ENCODE measurements at regions of chr6 and their contacts with region 1.

Region 1: GRCh38 chr6:117317261-117317660 is 51.9 kb downstream of the VGLL2 start:
- DNase-seq: no peak
- ATAC-seq: no peak
- H3K4me3 Mint-ChIP-seq: no peak overlapping the region
- H3K27ac Mint-ChIP-seq: no peak overlapping the region
- H3K4me1 Mint-ChIP-seq: no peaks in the 10 kb centered on the region
- H3K27me3 Mint-ChIP-seq: peaks cover 13% of the 10 kb centered on the region

Region 2: DNA sequence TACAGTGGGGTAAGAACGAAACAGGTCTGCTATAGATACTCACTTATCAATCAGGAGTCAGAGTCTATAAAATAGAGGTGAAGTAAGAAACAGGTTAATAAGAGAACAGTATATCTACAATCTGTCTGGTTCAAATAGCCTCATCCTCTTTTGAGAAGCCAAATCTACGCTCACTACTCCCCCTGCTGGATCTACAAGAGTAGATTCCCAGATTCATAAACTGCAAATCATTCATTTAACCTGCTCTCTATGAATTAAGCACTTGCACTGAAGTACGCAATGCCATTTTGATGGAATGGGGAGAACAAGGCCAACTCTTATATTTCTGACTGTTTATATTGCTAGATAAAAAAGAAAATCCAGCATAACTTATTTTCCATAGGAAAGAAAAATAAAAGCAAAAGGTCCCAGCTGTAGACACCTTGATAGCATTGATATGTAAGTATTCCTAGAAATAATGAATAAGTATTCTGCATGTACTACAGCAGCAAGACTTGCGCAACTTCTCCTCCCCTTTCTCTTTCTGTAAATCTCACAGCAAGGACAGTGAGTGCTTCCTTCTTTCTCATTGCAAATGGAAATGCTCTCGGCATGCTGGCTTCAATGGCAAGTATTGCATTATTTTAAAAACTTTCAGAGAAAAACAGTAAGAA is 347.9 kb before region 1 on chr6:
- CTCF ChIA-PET with region 1: interaction called, 4 read pairs
- POLR2A ChIA-PET with region 1: no interaction called
- intact Hi-C with region 1: loop called (anchors 1 to 5 kb)
- DNase-seq: peak; percentile 21
- ATAC-seq: no peak
- H3K4me3 Mint-ChIP-seq: no peak overlapping the region
- H3K27ac Mint-ChIP-seq: no peak overlapping the region
- H3K4me1 Mint-ChIP-seq: no peaks in the 10 kb centered on the region
- H3K27me3 Mint-ChIP-seq: peaks cover 2% of the 10 kb centered on the region

Region 3: GRCh38 chr6:117126213-117126612 is 191.0 kb before region 1 on chr6:
- CTCF ChIA-PET with region 1: no interaction called
- POLR2A ChIA-PET with region 1: no interaction called
- intact Hi-C with region 1: no loop called
- DNase-seq: no peak
- ATAC-seq: no peak
- H3K4me3 Mint-ChIP-seq: no peak overlapping the region
- H3K27ac Mint-ChIP-seq: no peak overlapping the region
- H3K4me1 Mint-ChIP-seq: no peaks in the 10 kb centered on the region
- H3K27me3 Mint-ChIP-seq: no peaks in the 10 kb centered on the region